Astrocyte of the cerebellum (primary cell): ENCODE measurements at regions of chr21 and their contacts with region 1.

Region 1: DNA sequence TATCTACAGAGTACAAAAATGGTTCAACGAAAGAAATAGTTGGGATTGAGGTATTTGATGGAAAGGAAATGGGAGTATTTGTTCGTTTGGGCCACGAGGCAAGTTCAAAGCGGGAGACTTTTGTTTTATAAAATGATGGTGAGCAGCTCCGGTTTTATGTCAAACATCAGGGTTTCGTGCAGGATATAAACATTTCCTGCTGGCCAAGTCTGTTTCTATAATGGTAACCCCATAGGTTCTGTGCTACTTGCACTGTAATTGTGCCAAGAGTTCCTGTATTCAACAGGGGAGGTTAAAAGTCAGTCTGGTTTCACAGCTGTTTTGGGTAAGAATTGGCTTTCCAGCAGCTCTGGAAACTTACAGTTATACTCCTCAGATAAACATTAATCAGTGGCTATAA is 290.3 kb upstream of the NRIP1 start:
- DNase-seq: no peak
- H3K4me3 ChIP-seq: no peak overlapping the region
- CTCF ChIP-seq: no peak

Region 2: DNA sequence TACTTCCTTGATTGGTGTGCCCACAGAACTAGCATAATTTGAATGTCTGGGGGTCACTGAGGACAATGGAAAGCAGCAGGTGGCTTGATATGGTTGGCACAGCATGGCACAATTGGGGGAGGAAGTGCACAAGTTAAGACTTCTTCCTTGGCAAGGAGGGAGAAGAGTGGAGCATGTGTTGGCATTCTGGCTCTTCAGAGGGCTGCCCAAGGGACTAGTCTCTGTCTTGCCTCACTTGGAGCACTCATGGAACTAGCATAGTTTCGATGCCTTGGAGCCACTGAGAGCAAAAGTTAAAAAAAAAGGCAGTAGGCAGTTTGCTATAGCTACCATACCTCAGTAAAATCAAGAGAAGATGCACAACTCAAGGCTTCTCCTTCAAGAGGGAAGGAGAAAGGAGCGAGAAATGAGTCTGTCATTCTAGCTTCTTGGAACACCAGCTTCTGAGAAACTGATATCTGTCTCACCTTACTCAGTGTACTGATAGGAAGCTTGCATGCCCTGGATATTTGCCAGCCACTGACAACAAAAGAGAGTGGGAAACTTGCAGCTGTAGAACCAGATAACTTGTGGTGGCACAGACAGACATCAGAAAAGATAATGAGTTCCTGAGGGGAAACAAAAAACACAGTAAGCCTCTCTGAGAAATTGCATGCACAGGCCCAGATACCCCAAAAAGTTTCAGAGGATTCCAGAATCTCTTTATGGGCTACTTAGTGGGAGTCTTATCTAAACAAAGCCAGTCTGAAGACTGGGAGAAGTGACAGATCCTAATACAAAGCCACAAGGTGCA is 601.4 kb before region 1 on chr21:
- in situ Hi-C with region 1: no loop called
- DNase-seq: no peak
- H3K4me3 ChIP-seq: no peak overlapping the region
- CTCF ChIP-seq: no peak

Region 3: GRCh38 chr21:15275615-15276200 is 79.4 kb before region 1 on chr21:
- in situ Hi-C with region 1: loop called (anchors 5 kb)
- DNase-seq: no peak
- H3K4me3 ChIP-seq: no peak overlapping the region
- CTCF ChIP-seq: no peak